ENCODE measurements at regions of chr14 and their contacts with region 1.

Region 1: DNA sequence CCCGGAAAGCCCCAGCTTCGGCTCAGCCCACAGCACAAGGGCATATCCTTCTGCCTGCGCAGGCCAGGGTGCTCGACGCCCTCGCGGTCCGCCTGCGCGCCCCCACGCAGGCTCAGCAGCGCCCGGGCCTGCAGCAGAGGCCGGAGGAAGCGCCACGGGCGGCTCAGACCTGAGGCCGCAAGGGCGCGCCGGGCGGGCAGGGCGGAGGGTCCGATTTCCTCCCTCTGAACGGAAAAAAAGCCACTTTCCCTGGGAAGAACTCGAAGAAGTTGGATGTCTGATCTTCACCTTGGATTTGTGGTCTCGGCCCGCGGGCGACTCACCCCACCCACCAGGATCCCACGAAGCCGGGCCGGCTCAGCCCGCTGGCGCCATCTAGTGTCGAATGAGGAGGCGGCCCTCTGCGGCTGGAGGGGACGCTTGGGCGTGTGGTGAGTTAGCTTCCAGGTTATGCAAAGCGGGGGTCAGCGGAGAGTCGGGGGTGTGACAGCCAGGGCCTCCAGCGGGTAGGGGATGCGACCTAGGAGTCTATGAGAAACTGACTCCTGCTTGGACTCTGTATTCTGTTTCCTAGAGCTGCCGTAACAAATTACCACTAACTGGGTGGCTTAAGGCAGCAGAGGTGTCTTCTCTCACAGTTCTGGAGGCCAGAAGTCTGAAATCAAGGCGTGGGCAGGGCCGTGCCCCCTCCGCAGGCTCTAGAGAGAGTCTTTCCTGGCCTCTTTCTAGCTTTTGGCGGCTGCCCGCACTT is 40.0 kb upstream of the SRSF5 start:
- DNase-seq: peak; percentile 59 to 85
- ATAC-seq: peak; percentile 98 to 99
- H3K4me3 ChIP-seq: peak overlapping the region; percentile 39
- H3K27ac ChIP-seq: peak overlapping the region; percentile 64 to 79
- H3K4me1 ChIP-seq: no peaks in the 10 kb centered on the region; the same call in 2 of the 3 replicates
- CTCF ChIP-seq: peak; percentile 98
- EP300 ChIP-seq: no peak
- POLR2A ChIP-seq: no peak
- RAD21 ChIP-seq: peak; percentile 97 to 99

Region 2: GRCh38 chr14:69580009-69580577 is 146.8 kb before region 1 on chr14:
- CTCF ChIA-PET with region 1: interaction called, 56 read pairs
- POLR2A ChIA-PET with region 1: no interaction called
- DNase-seq: peak; percentile 60 to 71
- ATAC-seq: peak; percentile 92 to 93
- H3K4me3 ChIP-seq: no peak overlapping the region
- H3K27ac ChIP-seq: no peak overlapping the region
- H3K4me1 ChIP-seq: peaks cover 5% of the 10 kb centered on the region; the same call in 1 of the 3 replicates
- CTCF ChIP-seq: peak; percentile 32
- EP300 ChIP-seq: no peak
- POLR2A ChIP-seq: no peak
- RAD21 ChIP-seq: peak; percentile 34 to 46; a peak in 4 of 5 replicates

Region 3: DNA sequence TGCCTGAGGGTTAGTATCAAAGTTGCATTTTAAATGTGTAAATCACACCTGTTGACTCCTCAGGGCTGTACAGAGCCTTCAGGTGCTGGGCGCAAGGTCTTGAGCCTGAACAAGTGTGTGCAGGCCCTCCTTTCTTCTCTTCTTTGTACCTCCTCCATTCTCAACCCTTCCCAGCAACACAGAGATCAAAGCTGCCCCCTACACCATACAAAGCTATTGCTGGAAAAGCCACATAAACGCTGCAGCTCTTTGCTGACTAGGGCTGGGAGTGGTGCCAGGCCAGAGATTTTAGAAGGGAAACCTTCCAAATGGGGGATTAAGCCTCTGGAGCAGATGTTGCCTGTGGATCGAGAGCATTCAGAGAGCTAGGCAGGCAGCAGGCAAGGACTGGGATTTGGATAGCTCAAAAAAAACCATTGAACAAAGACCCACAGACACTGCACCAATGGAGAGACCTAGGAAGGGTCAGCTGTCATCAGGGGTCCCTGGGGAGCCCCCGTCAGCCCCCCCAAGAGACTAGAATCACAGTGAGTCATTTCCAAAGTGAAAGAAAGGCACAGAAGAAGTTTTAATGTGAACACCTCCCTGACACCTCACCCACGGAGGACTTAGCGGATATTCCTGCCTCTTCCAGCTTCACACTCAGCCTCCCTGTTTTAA is 133.8 kb before region 1 on chr14:
- CTCF ChIA-PET with region 1: interaction called, 115 read pairs
- POLR2A ChIA-PET with region 1: no interaction called
- DNase-seq: no peak
- ATAC-seq: no peak
- H3K4me3 ChIP-seq: no peak overlapping the region
- H3K27ac ChIP-seq: no peak overlapping the region
- H3K4me1 ChIP-seq: no peaks in the 10 kb centered on the region
- CTCF ChIP-seq: no peak
- EP300 ChIP-seq: no peak
- POLR2A ChIP-seq: no peak
- RAD21 ChIP-seq: no peak

Region 4: GRCh38 chr14:69648477-69649451 is 78.2 kb before region 1 on chr14:
- CTCF ChIA-PET with region 1: interaction called, 12 read pairs
- POLR2A ChIA-PET with region 1: no interaction called
- DNase-seq: peak; percentile 29 to 60
- ATAC-seq: peak; percentile 42 to 85; a peak in 3 of 6 replicates
- H3K4me3 ChIP-seq: no peak overlapping the region
- H3K27ac ChIP-seq: peak overlapping the region; percentile 57 to 60
- H3K4me1 ChIP-seq: peaks cover 75% of the 10 kb centered on the region
- CTCF ChIP-seq: no peak
- EP300 ChIP-seq: no peak
- POLR2A ChIP-seq: no peak
- RAD21 ChIP-seq: no peak

Region 5: DNA sequence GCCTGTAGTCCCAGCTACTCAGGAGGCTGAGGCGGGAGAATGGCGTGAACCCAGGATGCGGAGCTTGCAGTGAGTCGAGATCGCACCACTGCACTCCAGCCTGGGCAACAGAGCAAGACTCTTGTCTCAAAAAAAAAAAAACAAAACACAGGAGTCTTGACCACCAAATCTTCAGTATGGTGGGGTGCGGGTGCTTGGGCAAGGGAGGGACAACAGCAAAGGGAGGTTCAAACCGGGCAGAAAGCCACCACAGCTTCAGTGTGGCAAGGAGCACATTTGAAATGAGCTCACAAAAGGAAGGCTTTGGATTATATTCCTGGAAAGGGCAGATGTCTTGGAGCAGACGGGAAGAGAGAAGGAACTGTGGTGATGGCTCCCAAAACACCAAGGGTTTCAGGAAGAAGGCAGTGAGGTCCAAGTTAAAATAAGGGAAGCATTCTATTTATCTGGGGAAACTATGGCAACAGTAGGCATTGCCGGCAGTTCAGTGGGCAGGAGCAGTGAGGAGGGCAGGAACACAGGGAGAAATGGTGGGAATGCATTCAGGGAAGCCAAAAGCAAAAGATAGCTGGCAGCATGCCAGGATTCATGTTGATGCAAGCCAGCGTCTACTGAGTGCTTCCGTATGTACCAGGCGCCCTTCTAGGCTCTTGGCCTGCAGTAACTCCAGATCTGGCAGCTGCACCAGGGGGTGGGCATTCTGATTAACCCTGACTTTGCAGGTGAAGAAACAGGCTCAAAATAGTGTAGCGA is 11.0 kb before region 1 on chr14:
- CTCF ChIA-PET with region 1: interaction called, 24 read pairs
- POLR2A ChIA-PET with region 1: no interaction called
- DNase-seq: no peak
- ATAC-seq: 0 out of 6 replicates have a peak, but pooled peaks of 1 of the 2 experiments have one; percentile 16
- H3K4me3 ChIP-seq: no peak overlapping the region
- H3K27ac ChIP-seq: no peak overlapping the region
- H3K4me1 ChIP-seq: peaks cover 15% of the 10 kb centered on the region
- CTCF ChIP-seq: no peak
- EP300 ChIP-seq: no peak
- POLR2A ChIP-seq: no peak
- RAD21 ChIP-seq: no peak

Region 6: DNA sequence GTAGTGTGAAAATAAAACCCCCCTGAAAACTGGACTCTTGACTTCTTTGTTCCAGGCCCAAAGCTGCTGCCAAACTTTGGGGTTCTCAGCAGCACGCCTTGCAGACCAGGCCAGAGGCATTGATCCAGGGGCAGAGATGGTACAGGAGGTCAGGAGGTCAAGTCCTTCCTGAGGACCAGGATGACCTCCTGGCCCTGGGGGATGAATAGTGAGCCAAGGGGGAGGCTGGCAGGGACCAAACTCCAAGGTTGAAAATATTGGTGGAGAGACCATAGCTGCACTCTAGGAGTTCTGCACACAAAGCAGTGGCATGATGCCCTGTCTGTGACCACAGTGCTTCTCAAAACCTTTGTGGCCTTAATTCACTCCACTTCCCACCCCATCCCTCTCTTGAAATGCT is 58.0 kb after region 1 on chr14:
- CTCF ChIA-PET with region 1: no interaction called
- POLR2A ChIA-PET with region 1: no interaction called
- DNase-seq: no peak
- ATAC-seq: no peak; a peak in 1 of 6 replicates
- H3K4me3 ChIP-seq: no peak overlapping the region
- H3K27ac ChIP-seq: no peak overlapping the region
- H3K4me1 ChIP-seq: no peaks in the 10 kb centered on the region
- CTCF ChIP-seq: no peak
- EP300 ChIP-seq: no peak
- POLR2A ChIP-seq: no peak
- RAD21 ChIP-seq: no peak

Region 7: GRCh38 chr14:69812714-69813113 is 85.8 kb after region 1 on chr14:
- CTCF ChIA-PET with region 1: no interaction called
- POLR2A ChIA-PET with region 1: no interaction called
- DNase-seq: peak in 1 of 2 experiments; percentile 46
- ATAC-seq: 0 out of 6 replicates have a peak, but pooled peaks have one; percentile 36 to 53
- H3K4me3 ChIP-seq: no peak overlapping the region
- H3K27ac ChIP-seq: no peak overlapping the region
- H3K4me1 ChIP-seq: no peaks in the 10 kb centered on the region
- CTCF ChIP-seq: peak; percentile 34; the same call in 2 of the 3 replicates
- EP300 ChIP-seq: no peak
- POLR2A ChIP-seq: no peak
- RAD21 ChIP-seq: peak; percentile 48 to 53; a peak in 3 of 5 replicates